Calu3 (cell line): ENCODE measurements at regions of chr1 and their contacts with region 1.

Region 1: GRCh38 chr1:7549277-7550161 is 221.6 kb upstream of the VAMP3 start:
- DNase-seq: peak; percentile 77
- H3K4me3 Mint-ChIP-seq: peak overlapping the region; percentile 2
- H3K27ac Mint-ChIP-seq: peak overlapping the region; percentile 92
- H3K4me1 Mint-ChIP-seq: peaks cover 35% of the 10 kb centered on the region
- H3K27me3 Mint-ChIP-seq: no peaks in the 10 kb centered on the region
- CTCF ChIP-seq: no peak

Region 2: GRCh38 chr1:6205849-6206519 is 1343.5 kb before region 1 on chr1 and contains the start of gene RNF207:
- CTCF ChIA-PET with region 1: no interaction called
- intact Hi-C with region 1: no loop called
- DNase-seq: peak; percentile 89
- H3K4me3 Mint-ChIP-seq: peak within 1 kb of the TSS; percentile 81
- H3K27ac Mint-ChIP-seq: no peak within 1 kb of the TSS
- H3K4me1 Mint-ChIP-seq: no peaks in the 10 kb centered on the region
- H3K27me3 Mint-ChIP-seq: no peaks in the 10 kb centered on the region
- CTCF ChIP-seq: no peak
- total RNA-seq, gene RNF207: 146 and 160 TPM in 2 replicates

Region 3: DNA sequence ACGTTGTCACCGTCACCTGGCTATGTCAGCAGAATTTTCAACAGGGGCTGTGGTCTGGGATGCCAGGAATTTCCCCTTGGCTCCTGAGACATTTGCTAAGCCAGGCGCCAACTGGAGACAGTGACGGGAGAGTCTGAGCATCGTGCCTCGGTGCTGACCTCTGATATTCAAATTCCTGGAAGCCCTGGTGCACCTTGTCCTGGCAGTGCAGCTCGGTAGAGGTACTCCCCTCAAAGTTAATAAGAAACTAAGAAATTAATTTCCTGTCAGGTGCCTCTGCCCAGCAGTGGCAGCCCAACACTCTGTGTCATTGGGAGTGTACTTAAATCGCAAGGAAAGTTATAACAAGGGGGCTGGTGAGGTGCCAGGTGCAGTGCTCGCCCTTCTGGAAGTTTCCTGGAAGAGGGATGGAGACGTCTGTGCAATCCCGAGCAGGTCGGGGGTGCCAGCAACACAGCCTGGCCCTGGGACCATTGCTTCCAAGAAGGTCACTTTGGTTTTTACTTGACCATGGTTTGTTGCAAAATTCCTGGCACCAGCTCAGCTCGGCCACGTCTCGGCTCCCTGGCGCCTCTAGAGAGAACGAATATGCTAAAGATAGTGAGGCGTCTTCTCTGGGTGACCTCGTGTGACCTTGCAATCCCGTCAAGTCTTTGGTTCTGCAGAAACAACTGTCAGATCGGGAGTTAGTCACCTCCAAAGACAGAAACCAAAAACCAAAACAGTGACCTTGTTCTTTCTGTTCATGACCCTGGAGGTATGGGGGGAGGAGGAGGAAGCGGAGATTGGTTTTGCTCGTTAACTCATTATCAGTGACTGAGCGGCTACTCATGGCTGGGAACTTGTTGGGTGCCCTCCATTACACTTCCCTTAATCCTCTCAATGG is 72.1 kb after region 1 on chr1:
- CTCF ChIA-PET with region 1: interaction called, 11 read pairs
- intact Hi-C with region 1: no loop called
- DNase-seq: no peak
- H3K4me3 Mint-ChIP-seq: no peak overlapping the region
- H3K27ac Mint-ChIP-seq: no peak overlapping the region
- H3K4me1 Mint-ChIP-seq: peaks cover 9% of the 10 kb centered on the region
- H3K27me3 Mint-ChIP-seq: peaks cover 92% of the 10 kb centered on the region
- CTCF ChIP-seq: no peak